ENCODE measurements at regions of chr20 and their contacts with region 1.

Region 1: GRCh38 chr20:3854462-3854871 is 7.8 kb downstream of the MAVS start:
- DNase-seq: no peak
- CTCF ChIP-seq: no peak

Region 2: GRCh38 chr20:3786665-3787323 is 67.7 kb before region 1 on chr20 and contains the start of gene CENPB:
- CTCF ChIA-PET with region 1: interaction called, 25 read pairs
- POLR2A ChIA-PET with region 1: no interaction called
- DNase-seq: peak; percentile 95
- CTCF ChIP-seq: peak; percentile 71

Region 3: GRCh38 chr20:3866466-3866916 is 12.0 kb after region 1 on chr20:
- CTCF ChIA-PET with region 1: interaction called, 16 read pairs
- POLR2A ChIA-PET with region 1: no interaction called
- DNase-seq: no peak
- CTCF ChIP-seq: no peak

Region 4: GRCh38 chr20:3875378-3875974 is 21.0 kb after region 1 on chr20:
- CTCF ChIA-PET with region 1: interaction called, 14 read pairs
- POLR2A ChIA-PET with region 1: no interaction called
- DNase-seq: no peak
- CTCF ChIP-seq: no peak

Region 5: DNA sequence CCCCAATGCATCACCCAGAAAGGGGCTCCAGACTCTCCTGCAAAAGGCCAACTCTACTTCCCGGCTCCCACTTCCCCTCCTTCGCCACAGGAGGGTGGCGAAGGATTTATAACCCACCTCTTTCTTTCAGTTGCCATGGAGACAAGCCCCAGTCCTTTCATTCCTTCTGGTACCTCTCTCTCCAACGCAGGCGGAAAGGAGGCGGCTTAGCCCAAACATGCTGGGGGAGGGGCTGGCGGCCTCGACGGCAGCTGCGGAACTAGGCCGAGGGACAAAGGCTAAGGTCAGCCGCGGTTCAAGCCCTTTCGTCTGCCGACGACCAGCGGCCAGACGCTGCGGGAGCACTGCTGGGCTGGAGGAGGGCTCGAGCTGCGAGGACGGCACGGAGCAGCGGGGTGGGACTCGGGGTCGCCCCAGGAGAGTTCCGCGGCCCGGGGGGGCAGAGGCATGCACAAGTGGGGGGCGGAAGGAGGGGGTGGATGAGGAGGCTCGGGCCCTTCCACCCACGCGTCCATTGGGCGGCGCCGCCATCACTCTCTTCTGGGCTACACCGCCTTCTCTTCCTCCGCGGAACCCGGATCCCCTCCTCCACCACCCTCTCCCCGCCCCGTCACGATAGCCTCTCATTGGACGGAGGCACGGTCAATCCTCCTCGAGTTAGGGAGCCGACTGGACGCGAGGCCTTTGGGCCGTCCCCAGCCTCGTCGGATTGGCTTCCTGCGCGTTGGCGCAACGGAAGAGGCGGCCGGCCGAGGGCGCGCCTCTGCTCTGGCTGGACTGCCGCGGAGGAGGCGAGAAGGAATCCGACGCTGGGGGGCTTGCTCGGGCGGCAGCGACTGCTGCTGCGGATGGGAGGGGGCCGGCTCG is 34.4 kb after region 1 on chr20 and contains the start of gene PANK2:
- CTCF ChIA-PET with region 1: interaction called, 17 read pairs
- POLR2A ChIA-PET with region 1: interaction called, 7 read pairs
- DNase-seq: peak; percentile 99
- CTCF ChIP-seq: peak; percentile 34

Region 6: GRCh38 chr20:4171538-4172116 is 317.2 kb after region 1 on chr20:
- CTCF ChIA-PET with region 1: no interaction called
- POLR2A ChIA-PET with region 1: no interaction called
- DNase-seq: no peak
- CTCF ChIP-seq: no peak

Measured in GM10248 (cell line).